WTC11 (cell line): ENCODE measurements at regions of chr10 and their contacts with region 1.

Region 1: GRCh38 chr10:103712570-103713498 is 142.5 kb downstream of the SH3PXD2A start:
- DNase-seq: peak; percentile 92
- ATAC-seq: peak; percentile 84
- H3K4me3 Mint-ChIP-seq: no peak overlapping the region
- H3K27ac Mint-ChIP-seq: peak overlapping the region; percentile 30; the same call in 1 of the 2 replicates
- H3K4me1 Mint-ChIP-seq: peaks cover 9% of the 10 kb centered on the region
- H3K27me3 Mint-ChIP-seq: no peaks in the 10 kb centered on the region
- CTCF ChIP-seq: peak; percentile 90

Region 2: GRCh38 chr10:103696411-103697145 is 16.3 kb before region 1 on chr10:
- CTCF ChIA-PET with region 1: interaction called, 22 read pairs
- POLR2A ChIA-PET with region 1: no interaction called
- DNase-seq: peak; percentile 55
- ATAC-seq: peak; percentile 53
- H3K4me3 Mint-ChIP-seq: no peak overlapping the region
- H3K27ac Mint-ChIP-seq: no peak overlapping the region; the same call in 1 of the 2 replicates
- H3K4me1 Mint-ChIP-seq: peaks cover 28% of the 10 kb centered on the region
- H3K27me3 Mint-ChIP-seq: peaks cover 32% of the 10 kb centered on the region
- CTCF ChIP-seq: no peak

Region 3: GRCh38 chr10:103752680-103753248 is 39.9 kb after region 1 on chr10:
- CTCF ChIA-PET with region 1: interaction called, 14 read pairs
- POLR2A ChIA-PET with region 1: interaction called, 3 read pairs
- DNase-seq: peak; percentile 66
- ATAC-seq: no peak
- H3K4me3 Mint-ChIP-seq: no peak overlapping the region
- H3K27ac Mint-ChIP-seq: no peak overlapping the region
- H3K4me1 Mint-ChIP-seq: peaks cover 13% of the 10 kb centered on the region
- H3K27me3 Mint-ChIP-seq: no peaks in the 10 kb centered on the region; the same call in 1 of the 2 replicates
- CTCF ChIP-seq: peak; percentile 91

Region 4: GRCh38 chr10:103845972-103846371 is 133.1 kb after region 1 on chr10:
- CTCF ChIA-PET with region 1: interaction called, 21 read pairs
- POLR2A ChIA-PET with region 1: no interaction called
- DNase-seq: no peak
- ATAC-seq: no peak; the same call in 1 of the 2 replicates
- H3K4me3 Mint-ChIP-seq: no peak overlapping the region
- H3K27ac Mint-ChIP-seq: no peak overlapping the region
- H3K4me1 Mint-ChIP-seq: peaks cover 46% of the 10 kb centered on the region
- H3K27me3 Mint-ChIP-seq: no peaks in the 10 kb centered on the region
- CTCF ChIP-seq: no peak

Region 5: GRCh38 chr10:103888113-103888841 is 175.4 kb after region 1 on chr10:
- CTCF ChIA-PET with region 1: interaction called, 43 read pairs
- POLR2A ChIA-PET with region 1: no interaction called
- DNase-seq: no peak
- ATAC-seq: peak; percentile 39
- H3K4me3 Mint-ChIP-seq: no peak overlapping the region
- H3K27ac Mint-ChIP-seq: no peak overlapping the region
- H3K4me1 Mint-ChIP-seq: no peaks in the 10 kb centered on the region
- H3K27me3 Mint-ChIP-seq: no peaks in the 10 kb centered on the region
- CTCF ChIP-seq: peak; percentile 48